GM12878 (cell line): ENCODE measurements at regions of chr9 and their contacts with region 1.

Region 1: DNA sequence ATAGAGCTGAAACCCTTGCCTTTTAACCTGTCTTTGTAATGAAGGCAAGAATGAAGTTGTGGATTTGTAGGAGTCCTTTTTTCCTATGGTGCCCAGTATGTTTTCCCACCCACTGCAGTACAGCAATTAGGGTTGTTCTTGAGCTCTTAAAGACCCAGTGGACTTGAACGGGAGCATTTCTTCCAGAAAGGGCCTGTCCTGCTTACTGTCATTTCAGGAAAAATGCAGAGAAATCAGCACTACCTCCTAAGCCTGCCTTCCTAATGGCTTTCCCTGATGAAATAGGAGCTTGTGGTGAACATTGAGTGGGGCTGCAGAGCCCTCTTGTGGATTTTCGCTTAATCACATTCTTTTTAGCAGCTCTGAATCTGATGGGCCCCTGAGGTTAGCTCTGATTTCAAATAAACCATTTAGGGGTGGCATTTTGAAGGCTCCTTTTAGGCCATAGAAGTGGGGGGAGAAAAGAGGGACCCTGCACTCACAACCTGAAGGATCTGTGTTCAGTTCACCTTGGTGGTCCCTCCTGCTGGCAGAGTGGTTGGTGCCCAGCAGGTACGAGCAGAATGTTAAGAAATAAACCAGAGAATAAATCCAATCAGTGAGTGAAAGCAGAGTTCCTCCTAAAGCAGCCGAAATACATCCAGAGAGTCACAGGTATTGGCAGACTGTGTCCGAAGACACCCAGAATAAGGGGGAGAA is 188.0 kb upstream of the KLF9 start:
- DNase-seq: peak; percentile 34
- ATAC-seq: peak; percentile 92
- H3K4me3 ChIP-seq: no peak overlapping the region
- H3K27ac ChIP-seq: no peak overlapping the region
- H3K4me1 ChIP-seq: no peaks in the 10 kb centered on the region
- H3K27me3 ChIP-seq: no peaks in the 10 kb centered on the region; a peak in 1 of 4 replicates
- CTCF ChIP-seq: peak; percentile 56 to 84 (median 84); a peak in 5 of 6 replicates
- EP300 ChIP-seq: no peak
- POLR2A ChIP-seq: no peak
- RAD21 ChIP-seq: peak; percentile 96

Region 2: GRCh38 chr9:70324963-70325362 is 277.5 kb before region 1 on chr9:
- CTCF ChIA-PET with region 1: interaction called, 4 read pairs
- POLR2A ChIA-PET with region 1: no interaction called
- RAD21 ChIA-PET with region 1: no interaction called
- SMC1A ChIA-PET with region 1: interaction called, 3 read pairs
- in situ Hi-C with region 1: loop called (anchors 5 kb)
- intact Hi-C with region 1: no loop called
- DNase-seq: no peak
- ATAC-seq: no peak
- H3K4me3 ChIP-seq: no peak overlapping the region
- H3K27ac ChIP-seq: no peak overlapping the region
- H3K4me1 ChIP-seq: no peaks in the 10 kb centered on the region
- H3K27me3 ChIP-seq: no peaks in the 10 kb centered on the region
- CTCF ChIP-seq: no peak
- EP300 ChIP-seq: no peak
- POLR2A ChIP-seq: no peak
- RAD21 ChIP-seq: no peak

Region 3: DNA sequence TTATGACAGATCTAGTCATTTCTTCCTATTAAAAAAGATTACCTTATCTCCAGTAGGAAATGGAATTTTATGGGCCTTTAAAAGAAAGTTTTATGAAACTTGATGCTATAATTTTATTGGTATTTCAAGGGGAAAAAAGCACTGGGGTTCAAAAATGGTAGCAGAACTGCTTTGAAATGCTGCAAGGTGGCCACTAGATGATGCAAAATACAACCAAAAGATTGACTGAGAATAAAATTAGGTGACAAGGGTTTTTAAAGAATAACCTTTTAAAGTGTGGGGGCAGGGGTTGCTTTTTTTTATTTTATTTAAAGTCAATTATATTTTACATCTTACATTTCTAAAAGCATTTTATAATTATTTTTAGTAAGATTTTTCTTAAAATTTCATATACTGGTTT is 249.7 kb before region 1 on chr9:
- CTCF ChIA-PET with region 1: interaction called, 11 read pairs
- POLR2A ChIA-PET with region 1: no interaction called
- RAD21 ChIA-PET with region 1: interaction called, 17 read pairs
- SMC1A ChIA-PET with region 1: interaction called, 11 read pairs
- in situ Hi-C with region 1: no loop called
- intact Hi-C with region 1: no loop called
- DNase-seq: no peak
- ATAC-seq: no peak
- H3K4me3 ChIP-seq: no peak overlapping the region
- H3K27ac ChIP-seq: no peak overlapping the region
- H3K4me1 ChIP-seq: no peaks in the 10 kb centered on the region
- H3K27me3 ChIP-seq: no peaks in the 10 kb centered on the region
- CTCF ChIP-seq: peak; percentile 43 to 47 (median 45); a peak in 5 of 6 replicates
- EP300 ChIP-seq: no peak
- POLR2A ChIP-seq: no peak
- RAD21 ChIP-seq: peak; percentile 59

Region 4: DNA sequence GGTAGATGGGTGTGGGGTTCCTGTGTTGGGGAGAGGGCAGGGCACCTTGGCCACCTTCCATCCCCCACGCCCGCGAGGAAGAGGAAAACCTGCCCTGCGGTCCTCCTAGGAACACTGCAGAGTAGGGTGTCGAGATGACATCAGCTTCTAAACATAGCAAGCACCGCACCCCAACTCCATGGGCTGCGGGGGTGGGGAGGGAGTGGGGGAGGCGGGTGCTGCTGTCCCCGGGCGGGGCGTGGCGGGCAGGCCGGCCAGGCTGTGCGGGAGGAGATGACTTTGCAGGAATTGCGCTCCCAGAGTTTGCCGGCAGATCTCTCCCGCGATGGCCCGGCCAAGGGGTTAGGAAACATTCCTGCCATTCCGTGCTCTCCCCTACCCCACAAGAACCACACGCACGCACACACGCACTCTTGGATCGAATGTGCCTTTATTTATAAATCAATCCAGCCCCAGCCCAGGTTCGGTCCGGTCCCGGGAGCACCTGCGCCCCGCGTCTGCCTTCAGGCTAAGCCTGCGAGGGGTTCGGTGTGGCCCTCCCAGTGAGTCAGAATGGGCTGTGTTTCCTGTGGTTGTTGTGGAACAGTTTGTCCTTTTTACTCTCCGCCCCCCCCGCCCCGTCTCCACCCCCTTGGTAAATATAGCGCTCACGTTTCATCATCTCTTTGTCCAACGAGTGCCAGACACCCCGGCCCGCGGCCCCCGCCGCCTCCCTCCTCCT is 182.8 kb before region 1 on chr9:
- CTCF ChIA-PET with region 1: interaction called, 11 read pairs
- POLR2A ChIA-PET with region 1: interaction called, 3 read pairs
- RAD21 ChIA-PET with region 1: interaction called, 10 read pairs
- SMC1A ChIA-PET with region 1: interaction called, 6 read pairs
- in situ Hi-C with region 1: no loop called
- intact Hi-C with region 1: loop called (anchors 5 kb)
- DNase-seq: peak; percentile 47
- ATAC-seq: peak; percentile 72
- H3K4me3 ChIP-seq: peak overlapping the region; percentile 56
- H3K27ac ChIP-seq: peak overlapping the region; percentile 22
- H3K4me1 ChIP-seq: peaks cover 14% of the 10 kb centered on the region
- H3K27me3 ChIP-seq: no peaks in the 10 kb centered on the region
- CTCF ChIP-seq: no peak
- EP300 ChIP-seq: peak in 1 of 2 experiments; percentile 15; a peak in 1 of 4 replicates
- POLR2A ChIP-seq: peak; percentile 74
- RAD21 ChIP-seq: no peak

Region 5: GRCh38 chr9:70504834-70505233 is 97.6 kb before region 1 on chr9:
- CTCF ChIA-PET with region 1: interaction called, 12 read pairs
- POLR2A ChIA-PET with region 1: no interaction called
- RAD21 ChIA-PET with region 1: interaction called, 3 read pairs
- SMC1A ChIA-PET with region 1: interaction called, 8 read pairs
- in situ Hi-C with region 1: no loop called
- intact Hi-C with region 1: no loop called
- DNase-seq: no peak
- ATAC-seq: no peak
- H3K4me3 ChIP-seq: no peak overlapping the region
- H3K27ac ChIP-seq: no peak overlapping the region
- H3K4me1 ChIP-seq: no peaks in the 10 kb centered on the region
- H3K27me3 ChIP-seq: no peaks in the 10 kb centered on the region
- CTCF ChIP-seq: no peak
- EP300 ChIP-seq: no peak
- POLR2A ChIP-seq: no peak
- RAD21 ChIP-seq: no peak

Region 6: GRCh38 chr9:70614786-70615463 is 12.5 kb after region 1 on chr9:
- CTCF ChIA-PET with region 1: interaction called, 18 read pairs
- POLR2A ChIA-PET with region 1: no interaction called
- RAD21 ChIA-PET with region 1: no interaction called
- SMC1A ChIA-PET with region 1: interaction called, 8 read pairs
- in situ Hi-C with region 1: no loop called
- intact Hi-C with region 1: no loop called
- DNase-seq: no peak
- ATAC-seq: no peak
- H3K4me3 ChIP-seq: no peak overlapping the region
- H3K27ac ChIP-seq: no peak overlapping the region
- H3K4me1 ChIP-seq: no peaks in the 10 kb centered on the region
- H3K27me3 ChIP-seq: no peaks in the 10 kb centered on the region; a peak in 1 of 4 replicates
- CTCF ChIP-seq: no peak
- EP300 ChIP-seq: no peak
- POLR2A ChIP-seq: no peak
- RAD21 ChIP-seq: no peak